Motor neuron (in vitro differentiated cells): ENCODE measurements at regions of chr5 and their contacts with region 1.

Region 1: GRCh38 chr5:59174248-59174844 is 591.5 kb downstream of the RAB3C start:
- ATAC-seq: peak; percentile 61 to 88 (median 78)
- H3K4me3 ChIP-seq: no peak overlapping the region
- H3K27ac ChIP-seq: no peak overlapping the region
- H3K4me1 ChIP-seq: peaks cover 0 to 2% of the 10 kb centered on the region in 2 donors

Region 2: DNA sequence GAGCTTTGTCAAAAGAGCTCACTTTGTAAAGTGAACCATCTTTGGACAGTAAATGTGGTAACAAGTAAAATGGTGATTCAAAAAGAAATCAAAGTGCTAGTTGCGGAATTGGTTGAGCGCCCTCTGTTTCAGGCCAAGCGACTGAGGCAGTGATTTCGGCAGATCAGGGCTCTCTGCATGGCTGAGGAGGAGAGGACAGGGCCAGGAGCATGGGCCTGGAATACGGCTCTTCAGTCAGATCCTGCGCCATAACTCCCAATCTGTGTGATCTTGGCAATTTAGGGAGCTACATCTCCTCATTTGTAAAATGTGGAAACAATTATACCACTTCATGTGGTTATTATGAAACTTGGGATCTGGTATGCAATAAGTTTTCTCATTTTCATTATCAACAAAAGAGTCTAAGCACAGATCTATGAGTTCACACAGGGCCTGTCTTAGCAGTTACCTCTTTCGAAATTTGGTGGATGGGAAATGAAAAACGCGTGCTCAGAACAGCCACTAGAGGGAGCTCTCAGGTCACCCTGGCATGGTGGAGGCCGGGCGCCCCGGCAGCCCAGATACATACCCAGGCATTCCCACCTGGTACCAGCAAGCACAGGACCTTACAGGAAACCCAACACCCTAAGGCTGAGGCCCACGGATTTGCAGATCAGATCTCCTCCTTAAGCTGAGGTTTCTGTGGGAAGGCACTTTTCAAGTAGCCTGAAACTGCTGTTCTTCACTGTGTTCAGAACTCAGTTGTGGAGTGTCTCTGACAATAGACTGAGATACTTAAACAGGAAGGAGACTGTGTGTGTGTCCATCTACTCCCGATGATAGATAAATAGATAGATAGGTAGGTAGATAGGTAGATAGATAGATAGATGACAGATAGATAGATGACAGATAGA is 287.8 kb before region 1 on chr5:
- in situ Hi-C with region 1: loop called in 4 of 9 experiments (anchors 10 to 25 kb)
- ATAC-seq: peak; percentile 27 to 88 (median 50)
- H3K4me3 ChIP-seq: no peak overlapping the region
- H3K27ac ChIP-seq: no peak overlapping the region
- H3K4me1 ChIP-seq: peaks cover 13 to 14% of the 10 kb centered on the region in 2 donors

Region 3: GRCh38 chr5:59007460-59008063 is 166.8 kb before region 1 on chr5:
- in situ Hi-C with region 1: no loop called
- ATAC-seq: peak in 1 of 8 experiments; percentile 41
- H3K4me3 ChIP-seq: no peak overlapping the region
- H3K27ac ChIP-seq: no peak overlapping the region
- H3K4me1 ChIP-seq: peaks cover 0 to 8% of the 10 kb centered on the region in 2 donors

Region 4: DNA sequence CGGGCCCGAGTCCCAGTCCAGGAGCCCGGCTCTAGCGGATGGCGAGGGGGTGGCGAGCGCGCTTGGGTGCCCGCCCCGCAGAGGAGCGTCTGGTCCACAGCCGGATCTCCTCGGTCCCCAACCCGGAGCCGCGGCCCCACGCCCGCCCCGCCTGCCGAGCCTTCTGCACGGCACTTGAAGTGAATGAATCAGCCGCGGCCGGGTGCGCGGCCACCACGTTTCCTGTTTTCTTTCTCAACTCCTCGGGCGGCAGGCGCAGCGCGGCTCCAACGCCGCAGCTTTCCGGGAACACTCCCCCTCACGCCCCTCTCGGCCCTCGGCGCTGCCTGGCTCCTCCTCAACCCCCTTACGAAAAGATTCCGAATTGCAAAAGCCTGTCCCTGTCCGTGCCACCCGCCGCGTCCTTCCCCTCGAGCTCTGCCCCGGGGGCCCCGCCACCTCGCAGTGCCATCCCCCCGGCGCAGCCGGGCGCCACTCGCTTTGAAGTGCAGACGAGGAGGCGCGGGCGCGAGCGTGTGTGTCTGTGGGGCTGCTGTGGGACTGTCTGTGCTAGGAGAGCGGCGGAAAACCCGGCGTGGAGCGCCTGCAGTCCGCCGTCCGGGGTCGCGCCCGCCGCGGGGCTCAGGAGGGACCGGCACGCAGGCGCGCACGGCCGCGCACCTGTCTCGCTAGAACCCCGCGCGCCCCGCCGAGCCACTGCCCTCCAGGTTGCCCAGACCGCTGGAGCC is 134.9 kb before region 1 on chr5:
- in situ Hi-C with region 1: loop called in 3 of 9 experiments (anchors 10 to 25 kb)
- ATAC-seq: peak; percentile 57 to 83 (median 78)
- H3K4me3 ChIP-seq: peak overlapping the region; percentile 50 to 85 (median 57)
- H3K27ac ChIP-seq: no peak overlapping the region
- H3K4me1 ChIP-seq: peaks cover 0 to 19% of the 10 kb centered on the region in 2 donors